B cell (primary cell): ENCODE measurements at regions of chr7 and their contacts with region 1.

Region 1: GRCh38 chr7:131016230-131016629 is 282.2 kb upstream of the KLF14 start:
- DNase-seq: no peak
- ATAC-seq: no peak
- H3K4me3 ChIP-seq: no peak overlapping the region
- H3K4me3 Mint-ChIP-seq: no peak overlapping the region
- H3K27ac ChIP-seq: peak overlapping the region in 1 of 2 donors; percentile 1
- H3K27ac Mint-ChIP-seq: no peak overlapping the region
- H3K4me1 ChIP-seq: peaks cover 37 to 40% of the 10 kb centered on the region in 2 donors
- H3K4me1 Mint-ChIP-seq: peaks cover 80% of the 10 kb centered on the region
- H3K27me3 ChIP-seq: no peaks in the 10 kb centered on the region
- H3K27me3 Mint-ChIP-seq: no peaks in the 10 kb centered on the region
- CTCF ChIP-seq: no peak

Region 2: DNA sequence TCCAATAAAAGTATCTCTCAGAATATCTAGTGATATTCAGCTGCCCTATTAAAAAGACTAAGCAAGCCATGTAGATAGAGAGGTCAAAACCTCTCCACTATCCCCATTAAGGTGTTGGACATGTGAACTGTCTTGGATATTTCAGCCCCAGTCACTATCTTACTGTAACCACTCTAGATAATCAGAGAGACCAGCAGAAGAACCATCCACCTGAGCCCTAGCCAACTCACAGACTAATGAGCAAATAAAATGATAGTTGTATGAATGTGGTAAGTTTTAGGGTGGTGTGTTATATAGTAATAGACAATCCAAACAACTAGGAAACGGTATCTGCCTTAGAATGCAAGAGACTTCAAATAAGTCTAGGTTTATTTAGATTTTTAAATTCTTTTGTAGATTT is 13.6 kb before region 1 on chr7:
- CTCF ChIA-PET with region 1: interaction called, 6 read pairs
- POLR2A ChIA-PET with region 1: interaction called, 3 read pairs
- intact Hi-C with region 1: loop called (anchors 2 kb)
- DNase-seq: no peak
- ATAC-seq: no peak
- H3K4me3 ChIP-seq: no peak overlapping the region
- H3K4me3 Mint-ChIP-seq: no peak overlapping the region
- H3K27ac ChIP-seq: no peak overlapping the region
- H3K27ac Mint-ChIP-seq: no peak overlapping the region
- H3K4me1 ChIP-seq: peaks cover 39 to 43% of the 10 kb centered on the region in 2 donors
- H3K4me1 Mint-ChIP-seq: peaks cover 52% of the 10 kb centered on the region
- H3K27me3 ChIP-seq: no peaks in the 10 kb centered on the region
- H3K27me3 Mint-ChIP-seq: no peaks in the 10 kb centered on the region
- CTCF ChIP-seq: no peak

Region 3: DNA sequence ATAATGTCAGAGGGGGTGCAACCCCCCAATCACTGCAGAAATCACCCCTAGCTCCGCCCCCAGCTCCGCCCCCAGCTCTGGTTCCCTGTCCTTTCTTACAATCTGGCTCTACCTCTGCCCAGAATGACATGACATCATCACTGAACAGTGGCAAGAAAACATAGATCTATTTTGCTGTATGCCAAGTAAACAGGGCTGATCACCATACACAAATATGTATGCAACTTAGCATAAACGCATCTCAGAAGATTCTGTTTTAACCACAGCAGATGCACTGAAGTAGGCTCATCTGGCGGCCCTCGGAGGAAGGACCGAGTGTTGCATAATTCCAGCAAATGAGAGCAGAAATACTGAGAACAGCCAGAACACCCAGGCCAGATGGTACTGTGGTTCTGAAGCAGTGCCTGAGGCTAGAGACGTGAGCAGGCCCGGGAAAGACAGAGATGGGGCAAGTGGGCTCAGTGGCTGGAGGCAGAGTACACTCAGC is 11.1 kb after region 1 on chr7:
- CTCF ChIA-PET with region 1: no interaction called
- POLR2A ChIA-PET with region 1: interaction called, 9 read pairs
- intact Hi-C with region 1: loop called (anchors 1 kb)
- DNase-seq: peak; percentile 60
- ATAC-seq: peak; percentile 14
- H3K4me3 ChIP-seq: no peak overlapping the region
- H3K4me3 Mint-ChIP-seq: peak overlapping the region; percentile 38
- H3K27ac ChIP-seq: peak overlapping the region; percentile 68 to 93
- H3K27ac Mint-ChIP-seq: peak overlapping the region; percentile 83
- H3K4me1 ChIP-seq: peaks cover 75 to 87% of the 10 kb centered on the region in 2 donors
- H3K4me1 Mint-ChIP-seq: peaks cover 85% of the 10 kb centered on the region
- H3K27me3 ChIP-seq: no peaks in the 10 kb centered on the region
- H3K27me3 Mint-ChIP-seq: no peaks in the 10 kb centered on the region
- CTCF ChIP-seq: no peak

Region 4: DNA sequence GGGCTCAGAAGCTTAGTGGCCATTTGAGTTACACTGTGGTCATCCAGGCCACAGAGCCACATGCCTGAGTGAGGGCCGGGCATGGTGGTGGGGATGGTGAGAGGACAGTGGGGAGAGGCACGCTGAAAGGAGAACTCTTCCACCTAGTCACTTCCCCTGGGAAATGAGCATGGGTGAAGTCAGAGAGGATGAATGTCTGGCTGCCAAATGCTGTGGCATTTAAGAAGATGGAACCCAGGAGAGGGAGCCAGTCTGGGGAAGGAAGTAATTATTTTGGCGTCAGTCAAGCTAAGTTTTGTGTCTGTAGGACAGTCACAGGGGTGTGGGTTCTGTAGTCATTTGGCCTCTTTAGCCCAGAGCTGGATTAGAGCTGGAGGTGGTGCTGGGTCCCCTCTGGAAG is 626.2 kb after region 1 on chr7:
- CTCF ChIA-PET with region 1: no interaction called
- POLR2A ChIA-PET with region 1: no interaction called
- intact Hi-C with region 1: no loop called
- DNase-seq: no peak
- ATAC-seq: no peak
- H3K4me3 ChIP-seq: no peak overlapping the region
- H3K4me3 Mint-ChIP-seq: no peak overlapping the region
- H3K27ac ChIP-seq: no peak overlapping the region
- H3K27ac Mint-ChIP-seq: no peak overlapping the region
- H3K4me1 ChIP-seq: no peaks in the 10 kb centered on the region
- H3K4me1 Mint-ChIP-seq: no peaks in the 10 kb centered on the region
- H3K27me3 ChIP-seq: peaks cover 0 to 2% (median 0%) of the 10 kb centered on the region in 4 experiments
- H3K27me3 Mint-ChIP-seq: peaks cover 8% of the 10 kb centered on the region
- CTCF ChIP-seq: no peak